Head of caudate nucleus (tissue), 42 donors: ENCODE measurements at regions of chr20 and their contacts with region 1.

Region 1: DNA sequence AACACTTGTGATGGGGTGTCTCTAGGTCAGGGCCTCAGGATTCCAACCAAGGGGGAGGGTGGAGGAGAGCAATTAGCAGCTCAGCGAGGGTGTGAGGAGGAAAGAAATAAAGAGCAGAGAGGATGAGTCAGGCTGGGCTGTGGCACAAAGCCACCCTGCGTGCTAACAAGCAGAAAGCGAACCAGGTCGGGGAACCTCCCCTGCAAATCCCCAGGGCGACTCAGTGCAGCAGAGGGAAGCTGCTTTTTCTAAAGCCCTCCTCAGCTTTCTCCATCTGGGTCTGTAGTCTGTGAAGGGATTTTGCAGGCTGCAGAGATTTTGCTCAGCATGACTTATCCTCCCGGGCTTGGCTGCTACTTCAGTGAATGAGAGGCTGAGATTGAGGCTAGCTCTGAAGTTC is 6.6 kb upstream of the SPO11 start:
- DNase-seq: peak in 38 of 42 donors; percentile 17 to 90 (median 52)

Region 2: DNA sequence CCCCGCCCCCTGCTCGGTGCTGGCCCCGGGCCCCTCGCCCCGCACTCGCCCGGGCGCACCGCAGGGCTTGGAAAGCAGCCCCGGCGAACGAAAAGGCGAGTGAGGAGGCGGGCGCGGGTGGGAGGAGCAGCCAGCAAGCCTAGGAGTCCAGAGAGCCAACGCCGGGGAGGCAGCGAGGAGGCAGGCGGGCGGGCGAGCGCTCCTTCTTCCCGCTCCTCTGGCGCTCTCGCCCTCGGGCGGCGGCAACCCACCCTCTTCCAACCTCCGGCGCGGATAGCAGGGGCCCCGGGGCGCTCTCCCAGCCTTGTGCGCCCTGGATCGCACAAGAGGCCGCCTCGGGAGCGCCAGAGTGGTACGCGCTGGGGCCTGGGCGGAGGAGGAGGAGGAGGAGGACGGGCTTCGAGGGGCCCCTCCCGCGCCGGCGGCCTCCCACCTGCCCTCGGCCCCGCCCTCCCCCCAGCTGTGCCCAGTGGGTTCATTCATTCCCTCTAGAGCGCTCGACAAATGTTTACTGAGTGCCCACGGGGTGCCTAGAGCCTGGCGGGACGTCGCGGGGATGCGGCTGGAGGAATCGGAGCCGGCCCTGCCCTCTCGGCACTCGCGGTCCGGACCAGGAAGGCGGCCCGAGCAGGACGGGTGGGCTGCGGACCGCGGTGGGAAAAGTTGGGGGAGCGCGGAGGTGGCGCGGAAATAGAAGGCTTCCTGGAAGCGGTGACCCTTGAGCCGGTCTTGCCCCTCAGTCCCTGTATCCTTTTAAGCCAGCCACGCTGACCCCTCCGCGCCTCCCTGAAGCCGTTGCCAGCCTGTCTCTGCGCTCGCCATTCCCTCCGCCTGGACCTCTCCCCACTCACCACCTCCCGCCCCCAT is 56.5 kb before region 1 on chr20 and contains the start of gene BMP7:
- intact Hi-C with region 1: loop called (anchors 10 kb)
- DNase-seq: peak in 31 of 42 donors; percentile 27 to 76 (median 57)